Endothelial cell of umbilical vein (primary cell): ENCODE measurements at regions of chr14 and their contacts with region 1.

Region 1: DNA sequence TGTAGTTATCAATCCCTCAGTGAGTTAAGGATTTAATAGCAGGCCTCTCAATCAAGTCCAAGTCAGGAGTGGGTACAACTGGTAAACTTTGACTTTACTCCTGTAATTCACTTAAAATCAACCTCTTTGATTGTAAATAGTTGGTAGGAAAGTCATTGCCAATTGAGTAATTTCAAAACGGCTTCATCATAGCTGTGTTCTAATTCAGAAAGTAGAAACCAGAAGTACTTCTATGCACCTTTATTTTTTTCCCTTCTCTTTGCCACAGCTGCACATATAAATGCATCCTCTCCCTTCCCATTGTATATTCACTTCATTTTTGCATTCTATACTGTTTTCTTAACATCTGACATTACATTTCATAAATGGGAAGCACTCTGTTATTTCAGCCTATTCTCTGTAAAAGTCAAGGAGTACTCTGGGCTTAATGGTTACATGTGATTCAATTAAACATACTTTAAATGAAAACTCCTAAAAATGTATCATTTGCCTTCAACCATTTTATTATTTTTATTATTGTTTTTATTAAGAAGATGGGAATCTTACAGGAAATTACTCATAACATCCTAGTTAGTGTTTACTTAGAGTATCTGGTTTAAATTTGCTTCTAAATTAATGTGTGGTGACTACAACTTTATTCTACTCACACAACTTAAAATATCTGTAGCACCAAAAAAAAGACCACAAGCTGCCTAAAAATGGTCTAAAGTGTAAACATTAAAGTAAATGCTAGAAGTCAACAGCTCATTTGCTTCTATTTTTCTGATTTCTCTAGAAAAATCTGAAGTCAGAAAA is 171.2 kb downstream of the CEP128 start:
- DNase-seq: peak; percentile 70
- H3K4me3 ChIP-seq: no peak overlapping the region
- H3K27ac ChIP-seq: peak overlapping the region; percentile 30
- H3K4me1 ChIP-seq: peaks cover 15% of the 10 kb centered on the region
- H3K27me3 ChIP-seq: no peaks in the 10 kb centered on the region
- CTCF ChIP-seq: no peak
- POLR2A ChIP-seq: no peak

Region 2: DNA sequence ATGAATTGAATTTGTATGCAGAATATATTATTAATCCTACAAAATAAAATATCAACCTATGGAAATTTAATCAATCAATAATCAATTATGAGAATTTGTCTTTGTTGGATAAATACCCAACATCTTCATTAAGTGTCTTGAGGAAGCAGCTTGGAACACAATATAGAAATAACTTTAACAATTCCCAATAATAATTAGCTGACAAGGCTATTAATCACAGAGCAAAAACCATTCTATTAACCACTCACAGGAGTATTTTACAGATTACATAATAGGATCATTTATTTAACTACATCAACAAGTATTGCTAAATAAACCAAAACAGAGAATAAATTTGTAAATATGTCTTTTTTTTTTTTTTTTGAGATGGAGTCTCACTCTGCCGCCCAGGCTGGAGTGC is 19.0 kb before region 1 on chr14:
- CTCF ChIA-PET with region 1: interaction called, 4 read pairs
- POLR2A ChIA-PET with region 1: no interaction called
- dilution Hi-C with region 1: no loop called
- intact Hi-C with region 1: loop called (anchors 2 kb)
- DNase-seq: no peak
- H3K4me3 ChIP-seq: no peak overlapping the region
- H3K27ac ChIP-seq: no peak overlapping the region
- H3K4me1 ChIP-seq: no peaks in the 10 kb centered on the region
- H3K27me3 ChIP-seq: no peaks in the 10 kb centered on the region
- CTCF ChIP-seq: no peak
- POLR2A ChIP-seq: no peak

Region 3: DNA sequence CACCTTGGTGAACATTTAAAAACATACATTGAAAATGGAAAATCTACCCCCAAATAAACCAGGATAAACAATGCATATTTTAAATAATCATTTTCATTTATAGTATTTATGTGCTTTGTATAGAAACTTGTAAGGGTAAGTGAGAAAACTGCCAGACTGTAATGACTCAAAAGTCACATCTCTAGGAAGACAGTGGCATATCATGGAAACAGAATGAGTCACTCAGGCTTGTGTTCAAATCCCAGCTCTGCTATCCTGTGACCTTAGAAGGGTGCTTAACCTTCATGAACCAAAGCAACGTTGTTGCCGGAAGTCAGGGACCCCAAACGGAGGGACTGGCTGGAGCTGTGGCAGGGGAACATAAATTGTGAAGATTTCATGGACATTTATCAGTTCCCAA is 28.6 kb after region 1 on chr14:
- CTCF ChIA-PET with region 1: no interaction called
- POLR2A ChIA-PET with region 1: no interaction called
- dilution Hi-C with region 1: no loop called
- intact Hi-C with region 1: loop called (anchors 1 kb)
- DNase-seq: no peak
- H3K4me3 ChIP-seq: no peak overlapping the region
- H3K27ac ChIP-seq: no peak overlapping the region
- H3K4me1 ChIP-seq: no peaks in the 10 kb centered on the region
- H3K27me3 ChIP-seq: no peaks in the 10 kb centered on the region
- CTCF ChIP-seq: no peak
- POLR2A ChIP-seq: no peak